ENCODE measurements at regions of chr12 and their contacts with region 1.

Region 1: GRCh38 chr12:55728939-55729823 is at the start of gene CD63:
- DNase-seq: peak; percentile 94 to 96 (median 94)
- H3K4me3 ChIP-seq: peak within 1 kb of the TSS; percentile 96
- H3K27ac ChIP-seq: peak within 1 kb of the TSS; percentile 94 to 99
- H3K4me1 ChIP-seq: peaks cover 12% of the 10 kb centered on the region
- H3K27me3 ChIP-seq: no peaks in the 10 kb centered on the region
- CTCF ChIP-seq: no peak
- EP300 ChIP-seq: peak; percentile 89
- POLR2A ChIP-seq: peak; percentile 78
- total RNA-seq, gene CD63: 406 to 954 (median 762) TPM

Region 2: GRCh38 chr12:55501601-55502000 is 227.6 kb before region 1 on chr12:
- intact Hi-C with region 1: no loop called
- DNase-seq: no peak
- H3K4me3 ChIP-seq: no peak overlapping the region
- H3K27ac ChIP-seq: no peak overlapping the region
- H3K4me1 ChIP-seq: no peaks in the 10 kb centered on the region
- H3K27me3 ChIP-seq: no peaks in the 10 kb centered on the region
- CTCF ChIP-seq: no peak
- EP300 ChIP-seq: no peak
- POLR2A ChIP-seq: no peak

Region 3: GRCh38 chr12:55940065-55940732 is 211.0 kb after region 1 on chr12:
- intact Hi-C with region 1: loop called in 1 of 4 experiments (anchors 5 kb)
- DNase-seq: peak; percentile 79 to 88 (median 84)
- H3K4me3 ChIP-seq: no peak overlapping the region
- H3K27ac ChIP-seq: no peak overlapping the region
- H3K4me1 ChIP-seq: peaks cover 3% of the 10 kb centered on the region
- H3K27me3 ChIP-seq: no peaks in the 10 kb centered on the region
- CTCF ChIP-seq: peak; percentile 80 to 89 (median 87)
- EP300 ChIP-seq: no peak
- POLR2A ChIP-seq: peak; percentile 25

Measured in ovary (tissue), 10 donors.